Activated naive CD4-positive, alpha-beta T cell treated with anti-CD3 and anti-CD28 coated beads for 36 hours (primary cell): ENCODE measurements at regions of chr13 and their contacts with region 1.

Region 1: DNA sequence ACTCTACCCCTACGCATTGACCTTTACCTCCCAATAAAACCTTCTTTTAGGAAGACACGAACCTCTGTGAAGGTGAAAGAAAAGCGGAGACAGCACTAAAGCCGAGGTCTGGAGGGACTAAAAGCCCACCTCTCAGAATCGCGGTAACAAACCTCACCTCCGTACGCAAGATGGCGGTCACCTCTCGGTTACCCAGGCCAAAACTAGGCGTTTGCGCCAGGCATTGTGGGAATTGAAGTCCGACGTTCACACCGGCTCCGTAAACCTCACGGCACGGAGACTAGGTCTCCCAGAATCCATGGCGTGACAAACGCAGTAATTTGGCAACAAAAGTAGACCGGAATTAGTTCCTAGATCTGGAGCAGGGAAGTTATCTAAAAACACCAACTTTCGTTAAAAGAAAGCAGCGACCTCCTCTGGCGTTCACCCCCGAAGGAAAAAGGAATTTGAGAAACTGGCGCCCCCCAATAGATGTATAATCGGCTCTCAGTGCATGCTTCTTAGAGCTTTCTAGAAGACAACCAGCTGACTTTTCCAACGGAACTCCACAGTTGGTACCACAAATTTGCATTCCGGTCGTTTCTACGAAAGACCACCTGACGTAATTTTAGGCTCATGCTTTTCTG is at the start of gene N4BP2L2:
- DNase-seq: peak; percentile 96
- H3K4me3 Mint-ChIP-seq: peak within 1 kb of the TSS; percentile 97
- H3K27ac Mint-ChIP-seq: peak within 1 kb of the TSS; percentile 99
- H3K4me1 Mint-ChIP-seq: peaks cover 37% of the 10 kb centered on the region
- H3K27me3 Mint-ChIP-seq: no peaks in the 10 kb centered on the region
- total RNA-seq, gene N4BP2L2: 81.1 to 82.3 TPM

Region 2: GRCh38 chr13:32191452-32191998 is 347.2 kb before region 1 on chr13:
- CTCF ChIA-PET with region 1: no interaction called
- intact Hi-C with region 1: no loop called
- DNase-seq: no peak
- H3K4me3 Mint-ChIP-seq: no peak overlapping the region
- H3K27ac Mint-ChIP-seq: no peak overlapping the region
- H3K4me1 Mint-ChIP-seq: no peaks in the 10 kb centered on the region
- H3K27me3 Mint-ChIP-seq: no peaks in the 10 kb centered on the region

Region 3: DNA sequence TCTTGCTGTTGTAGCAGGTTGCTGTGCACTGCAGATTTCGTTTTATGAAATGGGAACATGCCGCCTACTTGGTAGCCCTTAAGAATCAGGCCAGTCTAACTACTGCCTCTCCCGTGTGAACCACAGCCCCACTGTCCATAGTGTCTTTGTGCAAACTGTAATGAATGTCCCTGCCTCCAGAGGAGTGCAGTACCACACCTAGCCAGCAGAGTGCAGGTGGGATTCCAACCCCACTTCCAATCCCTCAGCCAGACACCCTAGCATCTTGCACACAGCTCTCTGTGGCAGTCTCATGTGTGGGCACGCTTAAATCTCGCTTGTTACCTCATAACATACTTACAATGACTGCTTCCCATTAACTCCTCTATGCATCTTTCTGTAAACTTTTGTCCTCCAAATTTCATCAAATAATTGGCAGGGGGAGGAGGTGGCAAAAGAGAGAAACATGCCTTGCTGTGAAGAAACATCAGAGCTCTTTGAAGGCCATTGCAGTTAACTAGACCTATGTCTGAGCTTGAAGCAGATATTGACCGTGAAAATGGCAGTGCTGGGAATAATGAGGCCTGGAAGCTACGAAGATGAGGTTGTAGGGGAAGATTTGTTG is 270.8 kb before region 1 on chr13:
- CTCF ChIA-PET with region 1: no interaction called
- intact Hi-C with region 1: loop called (anchors 2 kb)
- DNase-seq: peak; percentile 67
- H3K4me3 Mint-ChIP-seq: no peak overlapping the region
- H3K27ac Mint-ChIP-seq: no peak overlapping the region
- H3K4me1 Mint-ChIP-seq: peaks cover 5% of the 10 kb centered on the region
- H3K27me3 Mint-ChIP-seq: no peaks in the 10 kb centered on the region

Region 4: GRCh38 chr13:32443111-32443510 is 95.6 kb before region 1 on chr13:
- CTCF ChIA-PET with region 1: no interaction called
- intact Hi-C with region 1: loop called (anchors 1 kb)
- DNase-seq: peak; percentile 61
- H3K4me3 Mint-ChIP-seq: no peak overlapping the region
- H3K27ac Mint-ChIP-seq: no peak overlapping the region
- H3K4me1 Mint-ChIP-seq: peaks cover 14% of the 10 kb centered on the region
- H3K27me3 Mint-ChIP-seq: no peaks in the 10 kb centered on the region

Region 5: DNA sequence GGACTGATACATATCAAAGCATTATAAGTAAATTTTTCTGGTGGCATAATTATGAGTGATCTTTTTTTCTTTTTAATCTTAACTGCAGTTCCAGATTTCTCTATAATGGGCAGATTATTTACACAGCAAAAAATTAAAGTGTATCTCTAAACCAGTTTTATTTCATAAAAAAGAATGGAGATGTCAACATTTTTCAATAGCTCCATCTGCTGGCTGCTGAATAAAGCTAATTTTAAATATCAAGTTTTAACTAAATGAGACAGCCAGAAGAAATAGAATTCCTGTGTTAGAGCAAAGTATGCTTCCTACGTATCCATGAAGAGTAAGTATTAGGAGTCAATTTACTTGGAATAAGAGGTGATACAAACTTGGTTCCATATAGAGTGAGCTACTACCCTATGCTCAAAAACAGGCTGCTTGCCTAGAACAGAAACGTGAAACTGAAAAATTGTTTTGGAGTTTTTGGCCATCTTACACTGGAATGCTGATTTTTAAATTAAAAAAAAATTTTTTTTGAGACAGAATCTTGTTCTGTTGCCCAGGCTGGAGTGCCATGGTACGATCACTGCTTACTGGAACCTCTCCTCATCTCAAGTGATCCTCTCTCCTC is 42.5 kb after region 1 on chr13:
- CTCF ChIA-PET with region 1: interaction called, 14 read pairs
- intact Hi-C with region 1: loop called (anchors 1 kb)
- DNase-seq: no peak
- H3K4me3 Mint-ChIP-seq: no peak overlapping the region
- H3K27ac Mint-ChIP-seq: no peak overlapping the region
- H3K4me1 Mint-ChIP-seq: peaks cover 9% of the 10 kb centered on the region
- H3K27me3 Mint-ChIP-seq: no peaks in the 10 kb centered on the region

Region 6: DNA sequence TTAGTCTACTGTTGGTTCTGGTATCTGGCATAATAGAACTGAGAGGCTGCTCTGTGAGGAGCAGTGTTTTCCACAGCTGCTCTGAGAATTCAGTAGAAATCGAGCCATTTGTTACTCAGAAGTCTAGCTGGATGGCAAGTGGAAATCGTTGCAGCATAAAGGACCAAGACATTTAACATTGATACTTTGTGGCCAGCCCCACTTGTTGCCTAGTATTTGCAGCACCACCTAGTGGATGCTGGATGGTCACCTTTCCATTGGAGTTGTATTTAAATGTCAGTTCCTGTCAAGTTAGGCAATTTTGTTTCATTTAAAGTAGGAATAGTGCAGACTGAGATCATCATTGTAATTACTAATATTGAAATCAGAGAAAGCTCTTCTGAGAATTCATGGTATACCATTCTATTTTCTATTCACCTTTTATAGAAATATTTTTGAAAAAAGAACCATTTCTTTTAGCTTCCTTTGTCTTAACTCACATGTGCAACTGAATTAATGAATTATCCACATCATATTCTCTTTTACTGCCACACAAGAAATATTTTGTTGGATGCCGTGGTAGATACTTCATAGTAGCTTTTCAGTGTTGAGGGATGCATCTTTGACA is 112.1 kb after region 1 on chr13:
- CTCF ChIA-PET with region 1: interaction called, 8 read pairs
- intact Hi-C with region 1: loop called (anchors 2 kb)
- DNase-seq: peak; percentile 79
- H3K4me3 Mint-ChIP-seq: no peak overlapping the region
- H3K27ac Mint-ChIP-seq: peak overlapping the region; percentile 12
- H3K4me1 Mint-ChIP-seq: peaks cover 39% of the 10 kb centered on the region
- H3K27me3 Mint-ChIP-seq: no peaks in the 10 kb centered on the region